Activated CD8-positive, alpha-beta T cell treated with anti-CD3 and anti-CD28 coated beads for 36 hours (primary cell): ENCODE measurements at regions of chr6 and their contacts with region 1.

Region 1: GRCh38 chr6:49531774-49532569 is 18.5 kb upstream of the C6orf141 start:
- DNase-seq: no peak
- ATAC-seq: peak; percentile 74
- H3K4me3 Mint-ChIP-seq: no peak overlapping the region
- H3K27ac Mint-ChIP-seq: no peak overlapping the region
- H3K4me1 Mint-ChIP-seq: no peaks in the 10 kb centered on the region
- H3K27me3 Mint-ChIP-seq: peaks cover 4% of the 10 kb centered on the region
- CTCF ChIP-seq: peak; percentile 86

Region 2: GRCh38 chr6:49506569-49507111 is 25.3 kb before region 1 on chr6:
- CTCF ChIA-PET with region 1: no interaction called
- POLR2A ChIA-PET with region 1: no interaction called
- intact Hi-C with region 1: no loop called
- DNase-seq: no peak
- ATAC-seq: no peak
- H3K4me3 Mint-ChIP-seq: no peak overlapping the region
- H3K27ac Mint-ChIP-seq: no peak overlapping the region
- H3K4me1 Mint-ChIP-seq: no peaks in the 10 kb centered on the region
- H3K27me3 Mint-ChIP-seq: peaks cover 13% of the 10 kb centered on the region
- CTCF ChIP-seq: no peak

Region 3: GRCh38 chr6:49519660-49520059 is 12.3 kb before region 1 on chr6:
- CTCF ChIA-PET with region 1: interaction called, 13 read pairs
- POLR2A ChIA-PET with region 1: no interaction called
- intact Hi-C with region 1: no loop called
- DNase-seq: no peak
- ATAC-seq: no peak
- H3K4me3 Mint-ChIP-seq: no peak overlapping the region
- H3K27ac Mint-ChIP-seq: no peak overlapping the region
- H3K4me1 Mint-ChIP-seq: no peaks in the 10 kb centered on the region
- H3K27me3 Mint-ChIP-seq: peaks cover 5% of the 10 kb centered on the region
- CTCF ChIP-seq: no peak

Region 4: DNA sequence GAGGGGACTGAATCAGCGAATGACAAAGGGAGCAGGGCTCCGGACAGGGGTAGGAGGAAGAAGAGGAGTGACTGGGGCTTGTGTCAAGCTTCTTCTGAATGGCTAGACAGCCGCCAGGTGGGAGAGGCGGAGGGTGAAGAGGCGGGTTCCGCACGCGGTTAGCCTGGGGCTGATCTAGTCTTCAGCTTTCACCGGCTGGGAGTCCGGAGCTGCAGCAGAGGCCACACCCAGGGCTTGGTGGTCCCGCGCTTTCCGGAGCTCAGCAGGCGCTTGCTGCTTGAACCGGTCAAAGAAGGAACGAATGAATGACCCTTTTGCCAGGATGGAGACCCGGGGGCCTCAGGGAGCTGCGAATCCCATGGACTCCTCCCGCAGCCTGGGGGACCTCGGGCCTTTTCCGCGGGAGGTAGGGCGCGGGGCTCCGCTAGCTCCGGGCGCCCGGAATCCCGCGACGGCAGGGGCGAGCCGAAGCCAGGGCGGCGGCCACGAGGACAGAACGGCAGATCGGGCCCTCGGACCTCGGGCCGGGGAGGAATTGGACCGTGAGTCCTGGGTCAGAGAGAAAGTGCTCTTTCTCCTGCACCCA is 18.6 kb after region 1 on chr6 and contains the start of gene C6orf141:
- CTCF ChIA-PET with region 1: interaction called, 41 read pairs
- POLR2A ChIA-PET with region 1: no interaction called
- intact Hi-C with region 1: no loop called
- DNase-seq: peak; percentile 55
- ATAC-seq: peak; percentile 78
- H3K4me3 Mint-ChIP-seq: peak within 1 kb of the TSS; percentile 72
- H3K27ac Mint-ChIP-seq: no peak within 1 kb of the TSS
- H3K4me1 Mint-ChIP-seq: peaks cover 21% of the 10 kb centered on the region
- H3K27me3 Mint-ChIP-seq: peaks cover 28% of the 10 kb centered on the region
- CTCF ChIP-seq: no peak
- total RNA-seq, gene C6orf141: 0.43 to 0.87 TPM

Region 5: GRCh38 chr6:49565855-49566254 is 33.9 kb after region 1 on chr6:
- CTCF ChIA-PET with region 1: interaction called, 11 read pairs
- POLR2A ChIA-PET with region 1: no interaction called
- intact Hi-C with region 1: no loop called
- DNase-seq: no peak
- ATAC-seq: no peak
- H3K4me3 Mint-ChIP-seq: no peak overlapping the region
- H3K27ac Mint-ChIP-seq: no peak overlapping the region
- H3K4me1 Mint-ChIP-seq: no peaks in the 10 kb centered on the region
- H3K27me3 Mint-ChIP-seq: peaks cover 15% of the 10 kb centered on the region
- CTCF ChIP-seq: no peak

Region 6: DNA sequence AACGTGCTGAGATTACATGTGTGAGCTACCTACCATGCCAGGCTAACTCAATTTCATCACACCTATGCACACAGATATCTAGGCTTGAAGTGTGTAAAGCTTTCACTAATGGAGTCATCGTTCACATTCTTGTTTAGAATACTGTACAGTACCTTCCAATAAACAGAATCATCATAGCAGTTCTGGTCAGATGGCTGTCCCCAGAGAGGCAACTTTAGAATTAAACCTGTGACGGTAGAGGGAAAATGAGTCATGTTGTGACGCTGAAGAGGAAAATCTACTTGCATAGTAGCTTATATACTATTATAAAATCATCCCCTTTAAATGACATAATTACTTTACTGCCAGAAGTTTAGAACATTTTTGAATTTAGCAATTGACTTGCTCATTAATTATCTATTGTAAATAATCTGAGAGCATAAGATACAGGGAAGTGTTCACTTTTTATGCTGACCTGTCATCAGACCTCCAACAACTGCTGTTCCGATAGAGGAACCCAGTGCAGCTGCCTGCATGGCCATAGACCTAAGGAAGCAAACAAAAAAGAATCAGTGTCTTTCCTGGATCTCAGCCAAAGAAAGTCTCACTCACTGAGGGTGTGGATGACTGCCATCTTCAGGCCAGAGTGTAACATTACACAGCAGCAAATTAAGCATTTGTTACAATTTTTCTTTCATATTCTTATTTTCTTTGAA is 74.9 kb after region 1 on chr6:
- CTCF ChIA-PET with region 1: interaction called, 64 read pairs
- POLR2A ChIA-PET with region 1: no interaction called
- intact Hi-C with region 1: loop called (anchors 1 kb)
- DNase-seq: peak; percentile 11
- ATAC-seq: peak; percentile 61
- H3K4me3 Mint-ChIP-seq: no peak overlapping the region
- H3K27ac Mint-ChIP-seq: no peak overlapping the region
- H3K4me1 Mint-ChIP-seq: no peaks in the 10 kb centered on the region
- H3K27me3 Mint-ChIP-seq: peaks cover 7% of the 10 kb centered on the region
- CTCF ChIP-seq: peak; percentile 83

Region 7: DNA sequence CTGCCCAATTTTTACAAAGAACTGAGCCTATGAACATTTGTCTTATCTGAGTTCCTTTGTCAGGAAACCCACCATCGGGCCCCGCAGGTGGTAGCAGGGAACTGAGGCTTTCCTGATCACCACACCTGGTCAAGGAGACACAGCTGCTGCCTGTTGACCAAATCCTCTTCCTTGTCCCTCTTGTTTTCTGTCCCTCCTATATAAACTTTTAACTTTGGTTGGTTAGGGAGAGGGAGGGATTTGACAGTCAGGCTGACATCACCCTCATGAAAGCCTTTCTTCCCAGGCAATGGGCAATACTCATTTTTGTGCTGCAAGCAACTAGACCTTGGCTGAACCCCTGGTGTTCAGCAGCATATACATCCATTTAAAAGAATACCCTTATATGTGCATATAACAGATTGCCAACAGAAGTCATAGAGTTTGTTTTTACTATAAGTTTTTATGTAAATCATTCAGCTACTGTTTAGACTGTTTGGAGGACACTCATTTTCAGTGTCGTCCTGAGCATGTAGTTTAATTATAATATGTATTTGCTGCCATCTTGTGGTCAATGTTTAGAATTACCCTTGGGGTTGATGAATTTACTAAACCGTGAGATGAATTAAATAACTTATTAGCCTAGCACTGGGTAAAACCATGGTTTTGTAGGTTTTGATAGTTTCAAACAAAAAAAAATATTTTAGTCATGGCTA is 317.4 kb after region 1 on chr6:
- CTCF ChIA-PET with region 1: interaction called, 31 read pairs
- POLR2A ChIA-PET with region 1: no interaction called
- intact Hi-C with region 1: loop called (anchors 1 kb)
- DNase-seq: no peak
- ATAC-seq: no peak
- H3K4me3 Mint-ChIP-seq: no peak overlapping the region
- H3K27ac Mint-ChIP-seq: no peak overlapping the region
- H3K4me1 Mint-ChIP-seq: no peaks in the 10 kb centered on the region
- H3K27me3 Mint-ChIP-seq: no peaks in the 10 kb centered on the region
- CTCF ChIP-seq: peak; percentile 57